Right ventricle myocardium superior (tissue), 1 donor: ENCODE measurements at regions of chr4 and their contacts with region 1.

Region 1: DNA sequence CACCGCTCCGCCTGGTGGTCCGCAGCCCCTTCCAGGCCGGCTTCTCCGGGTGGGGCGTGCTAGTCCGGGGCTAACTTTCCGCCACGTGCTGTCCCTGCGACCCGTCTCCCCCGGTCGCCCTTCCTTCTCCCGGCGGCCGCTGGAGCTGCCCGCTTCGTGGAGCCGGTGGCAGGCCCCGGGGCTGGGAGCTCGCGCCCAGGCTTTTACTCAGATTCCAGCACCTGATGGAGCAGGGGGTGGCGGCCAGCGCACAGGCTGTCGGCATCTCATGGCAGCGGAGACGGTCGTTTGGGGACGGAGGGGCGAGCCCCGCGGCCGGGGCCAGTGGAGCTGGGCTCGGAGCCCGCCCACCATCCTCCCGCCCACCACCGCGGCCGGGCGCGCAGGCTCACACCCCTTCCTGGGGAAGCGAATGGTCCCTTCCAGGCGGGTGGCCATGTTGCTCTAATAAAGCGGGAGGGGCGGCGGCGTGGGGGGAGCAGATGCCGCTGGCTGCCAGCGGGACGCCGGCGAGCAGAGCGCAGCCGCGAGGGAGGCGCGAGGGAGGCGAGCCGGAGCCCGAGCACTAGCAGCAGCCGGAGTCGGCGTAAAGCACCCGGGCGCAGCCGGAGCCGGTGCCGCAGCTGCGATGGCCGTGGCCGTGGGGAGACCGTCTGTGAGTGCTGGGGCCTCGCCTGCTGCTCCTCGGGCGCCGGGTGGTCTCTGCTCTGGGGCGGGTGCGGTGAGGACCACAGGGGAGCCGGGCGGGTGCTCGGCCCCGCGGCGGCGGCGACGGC is at the start of gene SEPTIN11:
- DNase-seq: peak; percentile 95
- ATAC-seq: peak; percentile 93
- total RNA-seq, gene SEPTIN11: 25.4 TPM

Region 2: DNA sequence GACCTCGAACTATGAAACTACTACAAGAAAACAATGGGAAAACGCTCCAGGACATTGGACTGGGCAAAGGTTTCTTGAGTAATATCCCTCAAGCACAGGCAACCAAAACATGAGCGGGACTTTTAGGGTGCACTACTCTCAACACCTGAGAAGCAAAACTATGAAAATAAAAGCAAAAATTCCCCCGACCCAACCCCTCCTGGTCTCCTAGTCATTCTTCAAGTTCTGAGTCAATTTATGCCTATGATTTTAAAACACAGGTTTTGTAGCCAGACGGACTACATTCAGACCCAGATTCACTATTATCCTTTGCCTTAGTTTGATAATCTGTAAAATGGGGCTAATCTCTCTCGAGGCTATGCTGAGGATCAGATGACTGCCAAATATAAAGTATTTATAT is 148.6 kb before region 1 on chr4:
- intact Hi-C with region 1: no loop called
- DNase-seq: no peak
- ATAC-seq: no peak

Region 3: DNA sequence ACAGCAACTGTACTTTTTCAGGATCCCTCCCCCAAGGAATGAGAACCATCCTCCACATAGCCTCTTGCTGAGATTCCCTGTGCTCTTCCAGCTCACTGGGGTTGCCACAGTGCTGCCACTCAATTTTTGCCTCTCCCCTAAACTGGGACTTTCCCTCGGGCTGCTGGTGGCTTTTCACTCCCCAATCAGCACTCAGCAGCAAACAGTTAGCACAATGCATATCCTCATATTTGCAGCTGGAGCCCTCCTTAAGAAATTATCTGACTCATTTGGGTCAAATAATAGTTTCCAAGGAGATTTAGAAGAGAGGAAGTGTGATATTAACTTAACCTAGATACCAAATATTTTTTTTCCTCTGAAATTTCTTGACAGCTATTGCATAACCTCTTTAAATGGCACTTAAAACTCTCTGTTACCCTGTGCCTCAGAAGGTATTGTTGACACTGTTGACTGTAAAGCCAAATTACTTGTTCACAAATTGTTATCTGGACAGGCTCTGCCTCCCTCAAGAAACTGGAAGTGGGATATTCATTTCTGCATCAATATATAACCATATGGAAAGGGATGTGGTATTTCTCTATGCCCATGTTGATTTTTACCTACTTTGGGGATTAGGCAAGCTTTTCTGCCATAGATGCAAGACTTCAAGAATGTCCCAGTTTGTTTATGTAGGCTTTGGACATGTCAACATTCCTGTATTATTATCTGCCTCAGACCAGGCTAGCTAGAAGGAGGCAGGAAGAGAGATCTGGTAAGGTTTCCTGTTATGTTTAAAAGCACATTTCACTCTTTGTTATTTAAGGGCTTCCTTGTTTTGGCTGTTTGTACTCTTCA is 58.1 kb after region 1 on chr4:
- intact Hi-C with region 1: loop called (anchors 10 kb)
- DNase-seq: no peak
- ATAC-seq: peak; percentile 80